ENCODE measurements at regions of chr3 and their contacts with region 1.

Region 1: DNA sequence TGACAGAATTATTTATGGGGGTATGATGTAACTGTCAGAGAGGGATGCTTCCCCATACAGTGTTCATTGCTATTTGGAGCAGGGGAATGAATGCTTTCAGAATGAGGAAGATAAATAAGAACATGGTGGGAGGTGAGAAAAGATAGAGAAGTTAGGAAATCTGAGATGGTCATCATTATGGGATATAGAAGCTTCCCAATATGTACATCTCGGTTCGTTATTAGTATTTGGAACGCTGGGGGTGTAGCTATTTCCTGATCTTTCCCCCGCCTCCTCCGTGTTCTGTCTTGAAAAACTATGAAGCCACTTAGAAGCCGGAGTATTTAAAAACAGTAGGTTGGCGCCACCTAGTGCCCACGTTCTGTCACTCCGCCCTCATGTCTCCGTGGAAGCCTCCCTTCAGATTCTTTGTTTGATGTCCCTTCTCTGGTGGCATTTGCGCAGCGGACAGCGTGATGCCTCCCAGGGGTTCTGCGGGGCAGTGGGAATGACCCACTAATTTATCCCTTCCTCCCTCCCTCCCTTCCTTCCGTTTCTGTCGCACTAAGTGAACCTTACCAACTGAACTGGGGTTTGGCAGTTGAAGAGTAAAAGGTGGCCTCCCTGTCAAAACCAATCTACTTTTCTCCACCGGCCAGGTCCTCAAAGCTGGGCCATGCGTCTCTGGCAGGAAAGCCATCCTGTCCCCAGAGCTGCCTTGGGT is 184.5 kb downstream of the FEZF2 start:
- DNase-seq: peak; percentile 74 to 85
- H3K4me3 ChIP-seq: peak overlapping the region in 1 of 2 donors; percentile 15
- H3K27ac ChIP-seq: peak overlapping the region; percentile 51 to 60
- H3K4me1 ChIP-seq: peaks cover 0 to 37% (median 19%) of the 10 kb centered on the region in 4 donors
- H3K27me3 ChIP-seq: no peaks in the 10 kb centered on the region
- CTCF ChIP-seq: peak; percentile 77 to 88

Region 2: GRCh38 chr3:61858056-61858455 is 330.8 kb before region 1 on chr3:
- intact Hi-C with region 1: loop called (anchors 5 kb)
- DNase-seq: no peak
- H3K4me3 ChIP-seq: no peak overlapping the region
- H3K27ac ChIP-seq: peak overlapping the region in 1 of 2 donors; percentile 3
- H3K4me1 ChIP-seq: peaks cover 0 to 84% (median 29%) of the 10 kb centered on the region in 4 donors
- H3K27me3 ChIP-seq: no peaks in the 10 kb centered on the region
- CTCF ChIP-seq: peak; percentile 40 to 41

Region 3: GRCh38 chr3:62343755-62344154 is 154.9 kb after region 1 on chr3:
- intact Hi-C with region 1: no loop called
- DNase-seq: no peak
- H3K4me3 ChIP-seq: no peak overlapping the region
- H3K27ac ChIP-seq: no peak overlapping the region
- H3K4me1 ChIP-seq: no peaks in the 10 kb centered on the region
- H3K27me3 ChIP-seq: no peaks in the 10 kb centered on the region
- CTCF ChIP-seq: no peak

Measured in tibial artery (tissue), 4 donors.